Breast epithelium (tissue), 4 donors: ENCODE measurements at regions of chr2 and their contacts with region 1.

Region 1: DNA sequence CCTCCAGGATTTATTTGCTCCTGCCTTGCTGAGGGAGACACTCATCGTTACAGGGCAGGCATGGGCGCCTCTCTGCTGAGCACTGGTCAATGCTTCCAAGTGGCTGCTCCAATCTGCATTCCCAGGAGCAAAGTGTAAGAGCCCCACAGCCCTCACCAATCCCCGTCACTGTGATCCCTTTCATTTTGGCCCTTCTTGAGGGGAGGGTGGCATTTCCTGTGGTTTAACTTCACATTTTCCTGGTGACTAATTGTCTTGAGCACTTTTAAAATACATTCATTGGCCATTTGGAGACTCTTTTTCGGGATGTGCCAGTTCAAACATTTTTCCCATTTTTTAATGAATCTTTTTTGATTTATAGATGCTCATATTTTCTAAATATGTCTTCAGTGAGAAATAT is 33.0 kb downstream of the TPO start:
- DNase-seq: no peak
- H3K4me3 ChIP-seq: no peak overlapping the region
- H3K27ac ChIP-seq: no peak overlapping the region
- H3K4me1 ChIP-seq: no peaks in the 10 kb centered on the region
- H3K27me3 ChIP-seq: peaks cover 0 to 10% of the 10 kb centered on the region in 2 donors
- CTCF ChIP-seq: no peak
- POLR2A ChIP-seq: no peak

Region 2: GRCh38 chr2:1371082-1371481 is 75.2 kb before region 1 on chr2:
- intact Hi-C with region 1: no loop called
- DNase-seq: no peak
- H3K4me3 ChIP-seq: no peak overlapping the region
- H3K27ac ChIP-seq: peak overlapping the region; percentile 46 to 72
- H3K4me1 ChIP-seq: no peaks in the 10 kb centered on the region
- H3K27me3 ChIP-seq: no peaks in the 10 kb centered on the region
- CTCF ChIP-seq: no peak
- POLR2A ChIP-seq: no peak

Region 3: DNA sequence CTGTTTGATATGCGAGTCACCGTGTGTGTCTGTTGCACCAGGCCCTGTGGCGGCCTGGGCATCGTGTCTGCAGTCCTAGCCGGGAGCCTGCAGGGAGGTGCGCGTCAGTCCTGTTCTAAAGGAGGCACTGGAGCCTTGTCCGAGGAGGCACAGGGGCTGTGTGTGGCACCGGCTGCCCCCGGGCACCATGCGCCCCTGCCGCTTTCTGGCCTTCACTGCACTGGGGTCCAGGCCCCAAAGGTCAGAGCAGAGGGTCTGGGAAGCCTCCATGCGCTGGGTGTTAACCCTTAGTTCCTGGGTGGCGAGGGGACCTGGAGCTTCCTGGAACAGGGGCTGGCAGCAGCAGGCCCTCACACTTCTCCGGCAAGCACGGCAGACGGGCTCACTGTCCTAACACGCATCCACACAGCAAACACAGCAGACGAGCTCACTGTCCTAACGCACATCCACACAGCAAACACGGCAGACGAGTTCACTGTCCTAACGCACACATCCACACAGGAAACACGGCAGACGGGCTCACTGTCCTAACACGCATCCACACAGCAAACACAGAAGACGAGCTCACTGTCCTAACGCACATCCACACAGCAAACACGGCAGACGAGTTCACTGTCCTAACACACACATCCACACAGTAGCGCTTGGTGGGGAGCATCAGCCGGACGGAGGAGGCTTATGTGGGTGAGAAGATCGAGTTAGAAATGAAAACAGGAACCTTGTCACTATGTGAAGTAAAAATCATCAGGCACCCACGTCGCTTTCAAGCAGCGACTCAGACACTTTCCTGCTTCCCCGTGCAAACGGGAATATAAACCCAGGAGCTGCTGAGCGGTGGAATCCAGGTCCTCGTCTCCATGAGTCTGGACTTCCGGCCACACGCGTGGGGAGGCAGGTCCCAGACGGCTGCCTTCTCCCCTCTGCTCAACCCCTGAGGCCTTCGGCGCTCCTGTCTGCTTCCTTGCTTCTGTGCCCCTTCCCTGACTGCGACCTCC is 32.3 kb after region 1 on chr2:
- intact Hi-C with region 1: no loop called
- DNase-seq: no peak
- H3K4me3 ChIP-seq: no peak overlapping the region
- H3K27ac ChIP-seq: no peak overlapping the region
- H3K4me1 ChIP-seq: no peaks in the 10 kb centered on the region
- H3K27me3 ChIP-seq: peaks cover 0 to 11% of the 10 kb centered on the region in 2 donors
- CTCF ChIP-seq: no peak
- POLR2A ChIP-seq: no peak

Region 4: GRCh38 chr2:1698188-1698945 is 252.1 kb after region 1 on chr2:
- intact Hi-C with region 1: loop called (anchors 5 kb)
- DNase-seq: no peak
- H3K4me3 ChIP-seq: no peak overlapping the region
- H3K27ac ChIP-seq: no peak overlapping the region
- H3K4me1 ChIP-seq: no peaks in the 10 kb centered on the region
- H3K27me3 ChIP-seq: no peaks in the 10 kb centered on the region
- CTCF ChIP-seq: no peak
- POLR2A ChIP-seq: no peak